Breast epithelium (tissue), 4 donors: ENCODE measurements at regions of chr4 and their contacts with region 1.

Region 1: GRCh38 chr4:53361451-53361850 is 4.4 kb downstream of the SCFD2 start:
- DNase-seq: no peak
- H3K4me3 ChIP-seq: no peak overlapping the region
- H3K27ac ChIP-seq: no peak overlapping the region
- H3K4me1 ChIP-seq: peaks cover 0 to 9% of the 10 kb centered on the region in 2 donors
- H3K27me3 ChIP-seq: no peaks in the 10 kb centered on the region
- CTCF ChIP-seq: no peak
- POLR2A ChIP-seq: no peak

Region 2: DNA sequence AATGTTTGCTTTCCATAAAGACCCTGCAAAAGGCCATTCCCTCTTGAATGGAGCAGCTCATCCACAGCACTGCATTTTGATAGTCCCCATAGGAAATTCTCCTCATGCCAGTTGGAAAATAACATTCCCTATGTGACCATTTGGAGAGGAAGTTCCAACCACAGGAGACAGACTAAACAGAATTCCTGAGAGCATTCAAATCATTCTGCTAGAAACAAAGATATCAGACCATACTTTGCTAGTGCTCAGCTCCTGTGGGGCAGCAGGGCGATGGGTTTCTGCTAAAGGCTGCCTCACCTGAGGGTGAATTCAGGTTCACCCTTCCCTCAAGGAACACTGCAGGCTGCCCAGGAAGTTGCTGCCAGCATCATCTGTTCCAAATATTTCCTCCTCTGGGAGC is 171.1 kb after region 1 on chr4:
- intact Hi-C with region 1: loop called (anchors 5 kb)
- DNase-seq: no peak
- H3K4me3 ChIP-seq: no peak overlapping the region
- H3K27ac ChIP-seq: no peak overlapping the region
- H3K4me1 ChIP-seq: no peaks in the 10 kb centered on the region
- H3K27me3 ChIP-seq: no peaks in the 10 kb centered on the region
- CTCF ChIP-seq: no peak
- POLR2A ChIP-seq: no peak

Region 3: DNA sequence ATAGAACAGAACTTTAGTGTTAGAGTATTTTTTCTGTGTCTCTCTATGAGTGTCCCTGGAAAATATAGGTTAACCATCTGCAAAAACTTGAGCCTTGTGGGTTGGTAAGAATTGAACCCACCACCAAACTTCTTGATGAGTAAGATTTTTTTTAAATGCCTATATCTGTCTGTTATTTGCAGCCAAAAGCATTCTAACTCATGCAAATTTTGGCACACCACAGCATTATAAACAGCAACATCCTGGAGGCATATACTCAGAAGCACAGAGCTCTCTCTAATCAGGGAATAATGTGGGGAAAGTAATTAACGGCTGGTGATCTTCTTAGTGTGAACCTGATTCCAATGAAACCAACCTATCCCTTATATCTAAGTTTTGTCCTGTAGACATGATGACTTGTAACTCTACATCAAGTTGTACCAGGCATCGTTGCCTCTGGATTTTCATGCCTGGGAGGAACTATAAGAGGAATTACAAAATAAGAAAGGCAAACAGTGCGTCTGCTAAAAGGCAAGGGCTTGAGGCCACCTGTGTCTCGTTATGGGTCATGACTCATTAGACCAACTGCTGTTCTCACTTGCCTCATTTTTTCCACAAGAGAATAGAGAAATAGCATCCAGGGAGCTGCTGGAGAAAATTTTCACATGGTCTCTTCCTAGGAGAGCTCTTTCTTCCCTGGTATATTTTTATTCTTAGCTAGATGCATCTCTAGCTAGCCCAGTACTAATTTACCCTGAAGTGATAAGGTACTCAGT is 500.6 kb after region 1 on chr4:
- intact Hi-C with region 1: no loop called
- DNase-seq: no peak
- H3K4me3 ChIP-seq: no peak overlapping the region
- H3K27ac ChIP-seq: peak overlapping the region in 1 of 2 donors; percentile 45
- H3K4me1 ChIP-seq: no peaks in the 10 kb centered on the region
- H3K27me3 ChIP-seq: no peaks in the 10 kb centered on the region
- CTCF ChIP-seq: no peak
- POLR2A ChIP-seq: no peak

Region 4: DNA sequence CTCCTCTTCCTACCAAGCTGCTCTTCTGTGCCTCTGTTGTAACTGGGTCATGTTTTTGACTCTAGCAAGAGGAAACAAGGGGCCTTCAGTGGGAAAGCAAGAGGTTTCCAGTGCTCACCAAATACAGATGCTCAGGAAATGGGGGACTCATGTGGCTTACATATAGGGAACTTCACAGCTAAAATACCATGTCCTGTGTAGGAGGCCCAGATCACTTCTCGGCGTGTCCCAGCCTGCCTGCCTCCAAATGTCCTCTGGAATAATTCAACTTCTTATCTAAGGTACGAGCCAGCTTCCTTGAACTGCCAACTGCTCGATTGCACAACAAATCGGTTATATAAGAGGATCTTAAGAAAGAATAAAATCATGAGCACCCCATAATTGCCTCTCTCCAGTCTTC is 1457.6 kb after region 1 on chr4:
- intact Hi-C with region 1: no loop called
- DNase-seq: no peak
- H3K4me3 ChIP-seq: no peak overlapping the region
- H3K27ac ChIP-seq: no peak overlapping the region
- H3K4me1 ChIP-seq: no peaks in the 10 kb centered on the region
- H3K27me3 ChIP-seq: no peaks in the 10 kb centered on the region
- CTCF ChIP-seq: no peak
- POLR2A ChIP-seq: no peak